Panc1 (cell line): ENCODE measurements at regions of chr1 and their contacts with region 1.

Region 1: GRCh38 chr1:1929639-1930471 is 10.8 kb upstream of the TMEM52 start:
- DNase-seq: no peak
- ATAC-seq: 0 out of 2 replicates have a peak, but pooled peaks have one; percentile 17
- H3K4me3 ChIP-seq: no peak overlapping the region
- H3K27ac ChIP-seq: no peak overlapping the region
- H3K4me1 ChIP-seq: no peaks in the 10 kb centered on the region
- H3K27me3 ChIP-seq: no peaks in the 10 kb centered on the region
- CTCF ChIP-seq: no peak

Region 2: GRCh38 chr1:1777950-1778662 is 151.7 kb before region 1 on chr1 and contains the start of gene NADK:
- CTCF ChIA-PET with region 1: no interaction called
- POLR2A ChIA-PET with region 1: no interaction called
- in situ Hi-C with region 1: no loop called
- intact Hi-C with region 1: no loop called
- DNase-seq: no peak
- ATAC-seq: peak; percentile 73
- H3K4me3 ChIP-seq: peak within 1 kb of the TSS; percentile 62 to 73
- H3K27ac ChIP-seq: peak within 1 kb of the TSS; percentile 90
- H3K4me1 ChIP-seq: peaks cover 38% of the 10 kb centered on the region
- H3K27me3 ChIP-seq: no peaks in the 10 kb centered on the region
- CTCF ChIP-seq: no peak
- total RNA-seq, gene NADK: 101 TPM

Region 3: DNA sequence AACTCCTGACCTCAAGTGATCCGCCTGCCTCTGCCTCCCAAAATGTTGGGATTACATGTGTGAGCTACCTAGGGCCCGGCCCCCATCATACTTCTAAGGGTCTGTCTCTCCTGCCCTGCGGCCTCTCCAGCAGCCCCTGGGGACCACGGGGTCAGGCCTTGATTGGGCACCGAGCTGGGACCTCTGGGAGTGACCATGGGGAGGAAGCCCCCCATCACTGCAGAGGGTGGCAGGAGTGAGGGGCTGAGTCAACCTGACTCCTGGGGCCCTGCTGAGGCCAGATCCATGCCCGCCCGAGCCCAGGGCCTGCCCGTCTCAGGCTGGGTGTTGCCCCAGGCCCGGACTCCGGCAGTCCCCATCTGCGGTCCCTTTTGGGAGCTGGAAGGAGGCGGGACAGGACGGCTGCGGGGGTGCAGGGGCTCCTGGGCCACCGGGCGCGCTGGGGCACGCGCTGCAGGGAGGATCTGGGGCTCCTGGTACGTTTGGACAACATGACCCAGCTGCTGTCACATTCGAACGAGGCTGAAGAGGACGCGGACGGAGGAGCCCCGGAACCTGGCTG is 21.5 kb before region 1 on chr1:
- CTCF ChIA-PET with region 1: interaction called, 14 read pairs
- POLR2A ChIA-PET with region 1: no interaction called
- in situ Hi-C with region 1: no loop called
- intact Hi-C with region 1: no loop called
- DNase-seq: no peak
- ATAC-seq: peak; percentile 24
- H3K4me3 ChIP-seq: peak overlapping the region; percentile 56 to 62
- H3K27ac ChIP-seq: peak overlapping the region; percentile 79
- H3K4me1 ChIP-seq: peaks cover 25% of the 10 kb centered on the region
- H3K27me3 ChIP-seq: no peaks in the 10 kb centered on the region
- CTCF ChIP-seq: no peak

Region 4: DNA sequence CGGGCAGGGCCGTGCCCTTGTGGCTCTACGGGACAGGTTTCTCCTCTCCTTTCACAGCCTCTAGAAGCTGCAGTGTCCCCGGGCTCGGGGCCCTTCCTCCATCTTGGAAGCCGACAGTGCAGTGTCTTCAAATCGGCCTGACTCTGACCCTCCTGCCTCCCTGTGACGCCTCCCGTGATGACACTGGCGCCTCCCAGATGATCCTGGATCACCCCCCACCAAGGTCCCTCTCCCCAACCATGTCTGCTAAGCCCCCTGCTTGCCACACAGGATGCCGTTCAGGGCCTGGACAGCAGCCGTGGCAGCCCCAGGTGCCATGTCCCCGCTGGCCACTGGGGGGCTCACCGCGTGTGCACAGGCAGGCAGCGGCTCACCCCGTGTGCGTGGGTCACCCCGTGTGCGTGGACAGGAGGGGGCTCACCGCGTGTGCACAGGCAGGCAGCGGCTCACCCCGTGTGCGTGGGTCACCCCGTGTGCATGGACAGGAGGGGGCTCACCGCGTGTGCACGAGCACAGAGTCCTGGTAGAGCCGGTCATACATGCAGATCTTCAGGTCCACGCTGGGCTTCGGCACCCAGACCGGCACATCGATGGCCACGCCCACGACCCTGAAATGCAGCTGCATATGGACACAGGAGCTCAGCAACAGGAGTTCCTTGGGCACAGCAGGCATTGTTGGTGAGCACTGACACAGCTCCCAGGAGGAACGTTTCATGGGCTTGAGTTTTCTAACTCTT is 14.1 kb after region 1 on chr1:
- CTCF ChIA-PET with region 1: interaction called, 11 read pairs
- POLR2A ChIA-PET with region 1: no interaction called
- in situ Hi-C with region 1: no loop called
- intact Hi-C with region 1: no loop called
- DNase-seq: no peak
- ATAC-seq: peak; percentile 93
- H3K4me3 ChIP-seq: peak overlapping the region; percentile 25 to 51
- H3K27ac ChIP-seq: no peak overlapping the region
- H3K4me1 ChIP-seq: no peaks in the 10 kb centered on the region; the same call in 1 of the 2 replicates
- H3K27me3 ChIP-seq: no peaks in the 10 kb centered on the region
- CTCF ChIP-seq: peak; percentile 98

Region 5: GRCh38 chr1:1990222-1990621 is 60.4 kb after region 1 on chr1:
- CTCF ChIA-PET with region 1: no interaction called
- POLR2A ChIA-PET with region 1: no interaction called
- in situ Hi-C with region 1: loop called (anchors 10 kb)
- intact Hi-C with region 1: no loop called
- DNase-seq: no peak
- ATAC-seq: no peak
- H3K4me3 ChIP-seq: no peak overlapping the region
- H3K27ac ChIP-seq: no peak overlapping the region
- H3K4me1 ChIP-seq: no peaks in the 10 kb centered on the region; the same call in 1 of the 2 replicates
- H3K27me3 ChIP-seq: no peaks in the 10 kb centered on the region
- CTCF ChIP-seq: no peak